ENCODE measurements at regions of chr18 and their contacts with region 1.

Region 1: GRCh38 chr18:7497081-7497480 is 70.0 kb upstream of the PTPRM start:
- DNase-seq: no peak
- H3K4me3 ChIP-seq: no peak overlapping the region
- H3K27ac ChIP-seq: no peak overlapping the region
- H3K27me3 ChIP-seq: no peaks in the 10 kb centered on the region
- CTCF ChIP-seq: no peak

Region 2: GRCh38 chr18:8314124-8314523 is 817.0 kb after region 1 on chr18:
- CTCF ChIA-PET with region 1: no interaction called
- POLR2A ChIA-PET with region 1: interaction called, 12 read pairs
- DNase-seq: no peak
- H3K4me3 ChIP-seq: no peak overlapping the region
- H3K27ac ChIP-seq: no peak overlapping the region
- H3K27me3 ChIP-seq: no peaks in the 10 kb centered on the region
- CTCF ChIP-seq: no peak

Measured in AG04450 (cell line).